ENCODE measurements at regions of chr12 and their contacts with region 1.

Region 1: GRCh38 chr12:92473564-92473963 is 229.2 kb upstream of the PLEKHG7 start:
- DNase-seq: no peak
- CTCF ChIP-seq: no peak

Region 2: GRCh38 chr12:92485351-92486348 is 12.1 kb after region 1 on chr12:
- CTCF ChIA-PET with region 1: interaction called, 23 read pairs
- POLR2A ChIA-PET with region 1: no interaction called
- DNase-seq: no peak
- CTCF ChIP-seq: no peak